Activated naive CD4-positive, alpha-beta T cell treated with anti-CD3 and anti-CD28 coated beads for 36 hours (primary cell): ENCODE measurements at regions of chr1 and their contacts with region 1.

Region 1: GRCh38 chr1:220046052-220046930 is at the start of gene EPRS1:
- DNase-seq: peak; percentile 95
- H3K4me3 Mint-ChIP-seq: peak within 1 kb of the TSS; percentile 99
- H3K27ac Mint-ChIP-seq: peak within 1 kb of the TSS; percentile 98
- H3K4me1 Mint-ChIP-seq: peaks cover 27% of the 10 kb centered on the region
- H3K27me3 Mint-ChIP-seq: no peaks in the 10 kb centered on the region
- total RNA-seq, gene EPRS1: 227 to 229 TPM

Region 2: GRCh38 chr1:218284934-218285635 is 1761.2 kb before region 1 on chr1 and contains the start of gene RRP15:
- CTCF ChIA-PET with region 1: no interaction called
- intact Hi-C with region 1: loop called (anchors 1 kb)
- DNase-seq: peak; percentile 92
- H3K4me3 Mint-ChIP-seq: peak within 1 kb of the TSS; percentile 95
- H3K27ac Mint-ChIP-seq: peak within 1 kb of the TSS; percentile 83
- H3K4me1 Mint-ChIP-seq: peaks cover 26% of the 10 kb centered on the region
- H3K27me3 Mint-ChIP-seq: peaks cover 6% of the 10 kb centered on the region
- total RNA-seq, gene RRP15: 12.6 to 13.7 TPM

Region 3: DNA sequence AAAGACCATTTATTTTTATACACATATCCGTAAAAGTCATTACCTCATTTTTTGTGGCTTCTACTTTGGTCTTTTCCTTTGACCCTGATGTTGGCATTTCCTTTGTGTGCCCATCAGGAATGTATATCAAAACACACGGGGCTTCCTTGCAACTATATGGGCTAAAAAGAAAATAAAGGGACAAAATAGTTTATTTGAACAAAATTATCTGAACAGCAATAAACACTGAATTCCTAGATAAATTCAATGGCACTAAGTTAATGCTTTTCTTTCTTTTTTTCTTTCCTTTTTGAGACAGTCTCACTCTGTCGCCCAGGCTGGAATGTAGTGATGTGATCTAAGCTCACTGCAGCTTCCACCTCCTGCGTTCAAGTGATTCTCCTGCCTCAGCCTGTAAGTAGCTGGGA is 45.2 kb before region 1 on chr1:
- CTCF ChIA-PET with region 1: no interaction called
- intact Hi-C with region 1: no loop called
- DNase-seq: no peak
- H3K4me3 Mint-ChIP-seq: no peak overlapping the region
- H3K27ac Mint-ChIP-seq: no peak overlapping the region
- H3K4me1 Mint-ChIP-seq: no peaks in the 10 kb centered on the region
- H3K27me3 Mint-ChIP-seq: no peaks in the 10 kb centered on the region

Region 4: DNA sequence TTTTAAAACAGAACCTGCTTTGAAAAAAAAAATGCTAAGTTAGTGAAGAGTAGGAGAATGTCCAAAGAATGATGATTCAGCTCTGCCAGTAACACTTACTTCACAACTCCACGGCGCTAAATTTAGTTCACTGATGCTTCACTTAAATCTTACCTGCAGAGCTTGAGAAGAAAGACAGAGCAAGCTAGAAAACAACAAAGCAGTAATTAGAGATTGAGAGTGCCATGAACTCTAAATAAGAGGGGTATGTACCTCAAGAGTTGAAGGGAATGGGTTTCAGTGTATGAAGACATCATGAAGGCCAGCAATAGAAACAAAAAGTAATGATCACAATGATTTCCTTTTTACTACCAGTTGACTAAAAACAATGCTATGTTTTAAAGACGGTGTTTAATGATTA is 32.8 kb before region 1 on chr1:
- CTCF ChIA-PET with region 1: no interaction called
- intact Hi-C with region 1: loop called (anchors 2 kb)
- DNase-seq: no peak
- H3K4me3 Mint-ChIP-seq: no peak overlapping the region
- H3K27ac Mint-ChIP-seq: peak overlapping the region; percentile 28
- H3K4me1 Mint-ChIP-seq: peaks cover 10% of the 10 kb centered on the region
- H3K27me3 Mint-ChIP-seq: no peaks in the 10 kb centered on the region

Region 5: DNA sequence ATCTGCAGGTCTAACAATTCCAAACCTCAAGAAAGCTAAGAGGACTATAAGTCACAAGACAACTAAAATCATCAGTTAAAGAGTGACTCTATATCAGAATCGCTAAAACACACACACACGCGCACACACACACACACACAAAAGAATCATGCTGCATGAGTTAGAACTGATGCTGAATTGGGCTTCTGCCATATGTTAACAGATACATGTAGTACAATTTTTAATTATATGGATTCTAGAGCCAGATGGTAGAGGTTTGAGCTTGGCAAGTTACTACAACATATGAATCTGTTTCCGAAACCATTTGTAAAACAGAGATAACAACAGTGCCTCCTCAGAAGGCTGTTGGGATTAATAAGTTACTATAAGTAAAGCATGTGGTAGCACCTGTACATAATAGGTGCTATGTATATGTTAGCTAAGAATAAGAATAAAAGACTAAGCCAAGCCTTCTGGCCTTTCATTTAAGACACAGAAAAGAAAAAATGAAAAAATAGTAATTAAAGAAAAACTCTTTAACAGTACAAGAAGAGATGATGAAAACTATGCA is 17.9 kb before region 1 on chr1:
- CTCF ChIA-PET with region 1: interaction called, 4 read pairs
- intact Hi-C with region 1: loop called (anchors 2 kb)
- DNase-seq: no peak
- H3K4me3 Mint-ChIP-seq: no peak overlapping the region
- H3K27ac Mint-ChIP-seq: no peak overlapping the region
- H3K4me1 Mint-ChIP-seq: no peaks in the 10 kb centered on the region
- H3K27me3 Mint-ChIP-seq: no peaks in the 10 kb centered on the region

Region 6: DNA sequence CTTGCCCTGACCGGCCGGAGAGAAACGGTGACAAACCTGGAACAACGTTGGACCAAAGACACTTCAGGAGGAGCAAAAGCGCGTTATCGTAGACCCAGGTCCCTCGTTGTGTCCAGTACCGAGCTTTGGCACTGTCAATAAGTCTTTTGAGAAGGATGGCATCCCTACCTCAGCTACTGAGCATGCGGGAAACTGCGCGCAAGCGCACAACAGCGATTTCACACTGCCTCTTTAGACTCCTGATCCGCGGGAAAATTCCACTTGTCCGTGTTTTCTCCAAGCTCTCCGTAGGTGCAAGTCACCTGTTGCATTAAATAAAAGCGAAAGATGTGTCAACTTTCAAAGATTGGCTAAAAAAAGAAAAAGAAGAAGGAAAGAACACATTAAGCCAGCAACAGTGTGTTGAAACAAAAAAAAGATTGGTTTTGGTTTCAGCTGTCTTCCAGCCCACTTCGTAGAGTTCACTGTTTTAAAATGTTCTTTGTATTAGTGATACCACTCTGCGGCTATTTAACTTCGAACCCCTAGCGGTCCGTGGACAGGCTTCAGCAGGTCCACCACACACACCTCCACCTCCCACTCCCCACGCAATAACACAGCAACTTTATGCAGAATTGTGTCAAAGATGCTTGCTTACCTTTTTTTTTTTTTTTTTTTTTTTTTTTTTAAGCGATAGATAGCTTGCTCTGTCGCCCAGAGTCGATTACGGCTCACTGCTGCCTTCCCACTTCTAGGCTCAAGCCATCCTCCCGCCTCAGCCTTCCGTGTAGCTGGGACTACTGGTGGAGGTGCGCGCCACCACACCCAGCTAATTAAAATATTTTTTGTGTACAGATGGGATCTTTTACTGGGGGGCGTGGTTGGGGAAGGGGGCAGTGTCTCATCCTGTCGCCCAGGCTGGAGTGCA is 43.6 kb after region 1 on chr1 and contains the start of gene BPNT1:
- CTCF ChIA-PET with region 1: no interaction called
- intact Hi-C with region 1: loop called (anchors 1 kb)
- DNase-seq: peak; percentile 100
- H3K4me3 Mint-ChIP-seq: peak within 1 kb of the TSS; percentile 91
- H3K27ac Mint-ChIP-seq: peak within 1 kb of the TSS; percentile 85
- H3K4me1 Mint-ChIP-seq: peaks cover 12% of the 10 kb centered on the region
- H3K27me3 Mint-ChIP-seq: no peaks in the 10 kb centered on the region
- total RNA-seq, gene BPNT1: 18.5 to 21.3 TPM

Region 7: DNA sequence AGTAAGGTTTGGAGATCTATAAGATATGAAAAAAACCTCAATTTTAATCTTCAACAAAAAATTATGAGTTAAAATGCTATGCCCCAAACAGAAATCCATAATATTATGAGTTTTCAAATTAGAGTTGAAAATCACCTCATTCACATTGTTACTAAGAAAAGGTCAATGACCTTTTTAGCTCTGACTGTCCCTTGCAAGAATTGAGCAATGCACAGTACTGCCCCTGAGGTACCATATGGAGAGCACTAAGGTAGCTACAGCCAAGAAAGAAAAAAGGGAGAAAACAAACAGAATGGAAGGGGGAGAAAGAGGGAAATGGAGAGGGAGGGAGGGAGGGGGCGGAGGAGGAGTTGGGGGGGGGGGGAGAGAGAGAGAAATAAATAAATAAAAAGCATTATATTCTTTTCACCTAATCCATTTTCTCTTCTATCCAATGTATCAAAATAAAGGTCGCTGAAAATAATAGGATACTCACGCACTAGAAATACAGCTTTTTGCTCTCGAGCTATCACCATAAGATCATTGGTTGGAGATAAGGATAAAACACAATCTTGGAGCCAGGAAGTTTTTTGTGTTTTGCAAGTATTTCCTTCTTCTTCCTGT is 167.2 kb after region 1 on chr1:
- CTCF ChIA-PET with region 1: no interaction called
- intact Hi-C with region 1: no loop called
- DNase-seq: no peak
- H3K4me3 Mint-ChIP-seq: no peak overlapping the region
- H3K27ac Mint-ChIP-seq: no peak overlapping the region
- H3K4me1 Mint-ChIP-seq: peaks cover 8% of the 10 kb centered on the region
- H3K27me3 Mint-ChIP-seq: no peaks in the 10 kb centered on the region